ENCODE measurements at regions of chr21 and their contacts with region 1.

Region 1: GRCh38 chr21:36319765-36320420 is at the start of gene MORC3:
- DNase-seq: peak; percentile 99
- H3K4me3 Mint-ChIP-seq: peak within 1 kb of the TSS; percentile 82
- H3K27ac Mint-ChIP-seq: peak within 1 kb of the TSS; percentile 95
- H3K4me1 Mint-ChIP-seq: peaks cover 21% of the 10 kb centered on the region
- H3K27me3 Mint-ChIP-seq: no peaks in the 10 kb centered on the region
- CTCF ChIP-seq: no peak
- total RNA-seq, gene MORC3: 31.1 and 32.3 TPM in 2 replicates

Region 2: GRCh38 chr21:35664683-35665082 is 655.2 kb before region 1 on chr21:
- CTCF ChIA-PET with region 1: no interaction called
- POLR2A ChIA-PET with region 1: no interaction called
- intact Hi-C with region 1: no loop called
- DNase-seq: no peak
- H3K4me3 Mint-ChIP-seq: no peak overlapping the region
- H3K27ac Mint-ChIP-seq: no peak overlapping the region
- H3K4me1 Mint-ChIP-seq: no peaks in the 10 kb centered on the region
- H3K27me3 Mint-ChIP-seq: peaks cover 48% of the 10 kb centered on the region
- CTCF ChIP-seq: no peak

Region 3: DNA sequence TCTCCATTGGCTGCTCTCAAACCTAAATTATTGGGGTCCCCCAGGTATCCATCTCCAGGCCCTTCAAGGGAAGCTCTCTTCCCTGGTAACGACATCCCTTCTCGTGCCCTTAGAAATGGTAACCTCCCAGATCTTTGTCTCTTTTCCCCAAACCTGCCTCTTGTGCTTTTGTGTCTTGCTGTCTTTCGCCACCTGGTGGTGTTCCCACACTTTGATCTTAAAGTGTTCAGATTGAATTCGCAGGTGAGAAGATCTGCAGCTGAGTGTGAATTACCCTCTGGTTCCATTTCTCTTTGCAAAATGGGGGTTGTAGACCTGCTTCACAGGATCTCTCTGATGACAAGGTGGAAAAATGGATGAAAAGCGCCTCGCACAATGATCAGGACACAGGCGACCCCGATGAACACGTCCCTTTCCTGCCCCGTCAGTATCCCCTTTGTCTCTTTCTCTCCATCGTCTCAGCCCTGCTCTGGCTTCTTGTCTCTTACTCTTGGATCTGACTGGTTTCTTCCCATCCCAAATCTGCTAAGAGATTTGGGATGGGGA is 110.2 kb before region 1 on chr21:
- CTCF ChIA-PET with region 1: interaction called, 13 read pairs
- POLR2A ChIA-PET with region 1: interaction called, 12 read pairs
- intact Hi-C with region 1: loop called (anchors 1 kb)
- DNase-seq: peak; percentile 86
- H3K4me3 Mint-ChIP-seq: peak overlapping the region; percentile 61
- H3K27ac Mint-ChIP-seq: peak overlapping the region; percentile 80
- H3K4me1 Mint-ChIP-seq: peaks cover 16% of the 10 kb centered on the region
- H3K27me3 Mint-ChIP-seq: no peaks in the 10 kb centered on the region
- CTCF ChIP-seq: peak; percentile 50

Region 4: GRCh38 chr21:36265431-36265830 is 54.5 kb before region 1 on chr21:
- CTCF ChIA-PET with region 1: interaction called, 6 read pairs
- POLR2A ChIA-PET with region 1: interaction called, 16 read pairs
- intact Hi-C with region 1: no loop called
- DNase-seq: no peak
- H3K4me3 Mint-ChIP-seq: no peak overlapping the region
- H3K27ac Mint-ChIP-seq: no peak overlapping the region
- H3K4me1 Mint-ChIP-seq: no peaks in the 10 kb centered on the region
- H3K27me3 Mint-ChIP-seq: no peaks in the 10 kb centered on the region
- CTCF ChIP-seq: no peak

Region 5: GRCh38 chr21:36330904-36331303 is 11.0 kb after region 1 on chr21:
- CTCF ChIA-PET with region 1: interaction called, 5 read pairs
- POLR2A ChIA-PET with region 1: interaction called, 114 read pairs
- intact Hi-C with region 1: no loop called
- DNase-seq: peak; percentile 67
- H3K4me3 Mint-ChIP-seq: no peak overlapping the region
- H3K27ac Mint-ChIP-seq: peak overlapping the region; percentile 54
- H3K4me1 Mint-ChIP-seq: peaks cover 10% of the 10 kb centered on the region
- H3K27me3 Mint-ChIP-seq: no peaks in the 10 kb centered on the region
- CTCF ChIP-seq: peak; percentile 57

Region 6: GRCh38 chr21:36429947-36430546 is 110.2 kb after region 1 on chr21:
- CTCF ChIA-PET with region 1: interaction called, 3 read pairs
- POLR2A ChIA-PET with region 1: interaction called, 13 read pairs
- intact Hi-C with region 1: no loop called
- DNase-seq: peak; percentile 99
- H3K4me3 Mint-ChIP-seq: peak overlapping the region; percentile 80
- H3K27ac Mint-ChIP-seq: peak overlapping the region; percentile 98
- H3K4me1 Mint-ChIP-seq: peaks cover 32% of the 10 kb centered on the region
- H3K27me3 Mint-ChIP-seq: no peaks in the 10 kb centered on the region
- CTCF ChIP-seq: no peak